ENCODE measurements at regions of chr2 and their contacts with region 1.

Region 1: DNA sequence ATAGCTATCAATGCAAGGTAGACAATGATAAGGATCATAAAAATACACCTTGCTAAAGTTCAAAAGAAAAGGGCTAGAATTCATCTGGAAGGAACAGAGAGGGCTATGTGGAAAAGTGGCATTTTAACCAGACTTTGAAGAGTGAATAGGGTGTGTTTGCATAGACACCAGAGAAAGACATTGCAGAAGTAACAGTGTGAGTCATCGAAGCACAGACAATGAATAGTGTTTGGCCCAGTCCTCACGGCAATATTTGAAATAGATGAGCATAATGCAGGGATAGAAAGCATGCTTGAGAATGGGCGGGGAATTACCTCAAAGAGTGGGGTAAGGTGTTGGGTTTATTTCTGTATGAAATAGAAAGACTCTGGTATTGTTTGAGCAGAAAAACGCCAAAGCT is 24.2 kb downstream of the MYT1L start:
- DNase-seq: no peak
- ATAC-seq: no peak
- H3K4me3 ChIP-seq: no peak overlapping the region
- H3K27ac ChIP-seq: no peak overlapping the region
- H3K4me1 ChIP-seq: no peaks in the 10 kb centered on the region
- H3K27me3 ChIP-seq: no peaks in the 10 kb centered on the region; a peak in 1 of 5 replicates
- CTCF ChIP-seq: no peak
- EP300 ChIP-seq: no peak
- POLR2A ChIP-seq: no peak
- RAD21 ChIP-seq: no peak

Region 2: DNA sequence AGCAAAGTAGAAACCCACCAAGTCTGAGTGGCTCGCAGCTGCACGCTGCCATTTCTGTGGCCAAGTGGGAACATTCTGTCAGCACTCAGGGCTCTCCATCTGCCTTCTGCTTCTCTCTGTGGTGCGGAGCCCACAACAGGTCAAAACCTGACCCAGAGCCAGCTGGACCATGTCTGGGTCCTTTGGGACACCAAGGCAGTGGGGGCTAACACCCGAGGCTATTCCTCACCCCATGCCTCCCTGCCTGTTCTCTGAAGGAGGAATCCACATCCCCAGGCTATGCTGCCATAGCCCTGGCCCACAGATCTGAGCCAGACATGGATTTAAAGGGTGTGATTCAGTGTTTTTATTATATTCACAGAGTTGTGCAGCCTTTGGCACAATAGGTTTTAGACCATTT is 1269.8 kb before region 1 on chr2:
- CTCF ChIA-PET with region 1: no interaction called
- POLR2A ChIA-PET with region 1: no interaction called
- in situ Hi-C with region 1: no loop called
- intact Hi-C with region 1: loop called (anchors 5 kb)
- DNase-seq: no peak
- ATAC-seq: no peak
- H3K4me3 ChIP-seq: no peak overlapping the region
- H3K27ac ChIP-seq: no peak overlapping the region
- H3K4me1 ChIP-seq: no peaks in the 10 kb centered on the region
- H3K27me3 ChIP-seq: peaks cover 0 to 20% of the 10 kb centered on the region in 2 experiments; a peak in 2 of 5 replicates
- CTCF ChIP-seq: no peak
- EP300 ChIP-seq: no peak
- POLR2A ChIP-seq: no peak
- RAD21 ChIP-seq: no peak

Region 3: DNA sequence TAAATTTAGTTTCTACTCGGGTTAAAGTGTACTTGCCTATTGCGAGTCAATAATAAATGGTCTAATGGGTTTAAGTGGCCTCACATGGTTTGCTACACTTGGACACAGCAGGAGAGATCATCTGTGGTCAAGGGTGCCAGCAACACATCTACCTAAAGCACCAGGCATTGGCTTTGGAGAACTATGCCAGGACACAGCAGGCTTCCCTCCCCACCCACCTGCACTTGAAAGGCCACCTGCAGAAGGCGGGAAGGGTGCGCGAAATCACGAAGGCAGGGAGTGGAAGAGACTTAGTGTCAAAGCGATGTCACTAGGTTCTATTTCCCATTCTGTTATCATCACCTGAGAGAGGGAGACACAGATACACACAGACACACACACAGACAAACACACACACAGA is 20.3 kb before region 1 on chr2:
- CTCF ChIA-PET with region 1: no interaction called
- POLR2A ChIA-PET with region 1: no interaction called
- in situ Hi-C with region 1: no loop called
- intact Hi-C with region 1: no loop called
- DNase-seq: no peak
- ATAC-seq: no peak
- H3K4me3 ChIP-seq: no peak overlapping the region
- H3K27ac ChIP-seq: no peak overlapping the region
- H3K4me1 ChIP-seq: no peaks in the 10 kb centered on the region
- H3K27me3 ChIP-seq: peaks cover 0 to 34% of the 10 kb centered on the region in 2 experiments; a peak in 3 of 5 replicates
- CTCF ChIP-seq: no peak
- EP300 ChIP-seq: no peak
- POLR2A ChIP-seq: no peak
- RAD21 ChIP-seq: no peak

Measured in HepG2 (cell line).